GM12878 (cell line): ENCODE measurements at regions of chrX and their contacts with region 1.

Region 1: DNA sequence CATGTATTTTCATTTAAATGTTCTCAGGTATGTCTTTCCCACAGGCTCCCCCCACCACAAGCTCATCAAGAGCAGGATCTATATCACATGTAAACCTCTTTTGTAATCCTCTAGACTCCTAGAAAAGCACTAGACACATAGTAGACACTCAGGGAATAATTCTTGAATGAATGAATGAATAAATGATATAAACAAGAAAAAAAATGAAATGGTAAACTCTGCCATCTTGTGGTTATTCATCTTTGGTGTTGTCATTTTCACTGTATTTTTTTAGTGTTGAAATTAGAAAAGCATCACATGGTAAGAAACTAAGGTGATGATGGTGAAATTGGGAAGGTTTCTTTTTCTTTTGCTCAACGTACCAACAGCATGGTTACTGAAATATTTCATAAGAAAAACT is 34.2 kb upstream of the C1GALT1C1 start:
- DNase-seq: no peak
- ATAC-seq: no peak
- H3K4me3 ChIP-seq: no peak overlapping the region
- H3K27ac ChIP-seq: no peak overlapping the region
- H3K4me1 ChIP-seq: no peaks in the 10 kb centered on the region
- H3K27me3 ChIP-seq: no peaks in the 10 kb centered on the region
- CTCF ChIP-seq: peak in 1 of 3 experiments; percentile 29; a peak in 1 of 6 replicates
- EP300 ChIP-seq: no peak
- POLR2A ChIP-seq: no peak
- RAD21 ChIP-seq: 0 out of 2 replicates have a peak, but pooled peaks have one; percentile 19

Region 2: GRCh38 chrX:120499301-120500072 is 164.6 kb before region 1 on chrX:
- CTCF ChIA-PET with region 1: interaction called, 14 read pairs
- POLR2A ChIA-PET with region 1: no interaction called
- RAD21 ChIA-PET with region 1: interaction called, 3 read pairs
- SMC1A ChIA-PET with region 1: interaction called, 12 read pairs
- in situ Hi-C with region 1: loop called (anchors 10 kb)
- intact Hi-C with region 1: loop called (anchors 1 kb)
- DNase-seq: no peak
- ATAC-seq: no peak
- H3K4me3 ChIP-seq: no peak overlapping the region
- H3K27ac ChIP-seq: no peak overlapping the region
- H3K4me1 ChIP-seq: no peaks in the 10 kb centered on the region
- H3K27me3 ChIP-seq: no peaks in the 10 kb centered on the region
- CTCF ChIP-seq: no peak
- EP300 ChIP-seq: no peak
- POLR2A ChIP-seq: no peak
- RAD21 ChIP-seq: no peak

Region 3: GRCh38 chrX:120514236-120514635 is 149.8 kb before region 1 on chrX:
- CTCF ChIA-PET with region 1: interaction called, 17 read pairs
- POLR2A ChIA-PET with region 1: no interaction called
- RAD21 ChIA-PET with region 1: interaction called, 7 read pairs
- SMC1A ChIA-PET with region 1: interaction called, 10 read pairs
- in situ Hi-C with region 1: loop called (anchors 10 kb)
- intact Hi-C with region 1: no loop called
- DNase-seq: no peak
- ATAC-seq: 0 out of 3 replicates have a peak, but pooled peaks have one; percentile 54
- H3K4me3 ChIP-seq: no peak overlapping the region
- H3K27ac ChIP-seq: no peak overlapping the region
- H3K4me1 ChIP-seq: no peaks in the 10 kb centered on the region
- H3K27me3 ChIP-seq: no peaks in the 10 kb centered on the region
- CTCF ChIP-seq: peak in 2 of 3 experiments; percentile 13 to 34; a peak in 3 of 6 replicates
- EP300 ChIP-seq: no peak
- POLR2A ChIP-seq: no peak
- RAD21 ChIP-seq: peak; percentile 29; the same call in 1 of the 2 replicates

Region 4: DNA sequence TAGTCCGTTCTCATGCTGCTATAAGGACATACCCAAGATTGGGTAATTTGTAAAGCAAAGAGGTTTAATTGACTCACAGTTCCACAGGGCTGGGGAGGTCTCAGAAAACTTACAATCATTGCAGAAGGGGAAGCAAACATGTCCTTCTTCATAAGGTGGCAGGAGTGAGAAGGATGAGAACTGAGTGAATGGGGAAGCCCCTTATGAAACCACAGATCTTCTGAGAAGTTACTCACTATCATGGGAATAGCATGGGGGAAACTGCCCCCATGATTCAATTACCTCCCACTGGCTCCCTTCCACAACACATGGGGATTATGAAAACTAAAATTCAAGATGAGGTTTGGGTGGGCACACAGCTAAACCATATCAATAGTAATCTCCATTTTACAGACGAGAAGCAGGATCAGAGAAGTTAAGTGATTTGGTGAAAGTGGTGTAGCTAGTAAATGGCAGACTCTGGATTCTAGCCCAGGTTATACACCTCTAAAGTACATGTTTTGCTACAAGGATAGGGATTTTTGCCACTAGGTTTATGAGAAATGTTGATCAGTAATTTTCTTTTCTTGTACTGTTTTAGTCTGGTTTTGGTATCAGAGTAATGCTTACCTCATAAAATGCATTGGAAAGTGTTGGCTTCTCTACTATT is 13.0 kb after region 1 on chrX:
- CTCF ChIA-PET with region 1: interaction called, 9 read pairs
- POLR2A ChIA-PET with region 1: no interaction called
- RAD21 ChIA-PET with region 1: no interaction called
- SMC1A ChIA-PET with region 1: interaction called, 5 read pairs
- in situ Hi-C with region 1: no loop called
- intact Hi-C with region 1: loop called (anchors 1 kb)
- DNase-seq: no peak
- ATAC-seq: peak; percentile 38; the same call in 1 of the 3 replicates
- H3K4me3 ChIP-seq: no peak overlapping the region
- H3K27ac ChIP-seq: no peak overlapping the region
- H3K4me1 ChIP-seq: no peaks in the 10 kb centered on the region
- H3K27me3 ChIP-seq: no peaks in the 10 kb centered on the region
- CTCF ChIP-seq: no peak
- EP300 ChIP-seq: no peak
- POLR2A ChIP-seq: no peak
- RAD21 ChIP-seq: no peak

Region 5: GRCh38 chrX:120769576-120770341 is 105.7 kb after region 1 on chrX:
- CTCF ChIA-PET with region 1: interaction called, 18 read pairs
- POLR2A ChIA-PET with region 1: no interaction called
- RAD21 ChIA-PET with region 1: no interaction called
- SMC1A ChIA-PET with region 1: interaction called, 11 read pairs
- in situ Hi-C with region 1: no loop called
- intact Hi-C with region 1: no loop called
- DNase-seq: no peak
- ATAC-seq: peak; percentile 51; the same call in 2 of the 3 replicates
- H3K4me3 ChIP-seq: no peak overlapping the region
- H3K27ac ChIP-seq: no peak overlapping the region
- H3K4me1 ChIP-seq: no peaks in the 10 kb centered on the region
- H3K27me3 ChIP-seq: no peaks in the 10 kb centered on the region
- CTCF ChIP-seq: peak; percentile 33 to 47 (median 46); a peak in 4 of 6 replicates
- EP300 ChIP-seq: no peak
- POLR2A ChIP-seq: no peak
- RAD21 ChIP-seq: peak; percentile 74